ENCODE measurements at regions of chr2 and their contacts with region 1.

Region 1: DNA sequence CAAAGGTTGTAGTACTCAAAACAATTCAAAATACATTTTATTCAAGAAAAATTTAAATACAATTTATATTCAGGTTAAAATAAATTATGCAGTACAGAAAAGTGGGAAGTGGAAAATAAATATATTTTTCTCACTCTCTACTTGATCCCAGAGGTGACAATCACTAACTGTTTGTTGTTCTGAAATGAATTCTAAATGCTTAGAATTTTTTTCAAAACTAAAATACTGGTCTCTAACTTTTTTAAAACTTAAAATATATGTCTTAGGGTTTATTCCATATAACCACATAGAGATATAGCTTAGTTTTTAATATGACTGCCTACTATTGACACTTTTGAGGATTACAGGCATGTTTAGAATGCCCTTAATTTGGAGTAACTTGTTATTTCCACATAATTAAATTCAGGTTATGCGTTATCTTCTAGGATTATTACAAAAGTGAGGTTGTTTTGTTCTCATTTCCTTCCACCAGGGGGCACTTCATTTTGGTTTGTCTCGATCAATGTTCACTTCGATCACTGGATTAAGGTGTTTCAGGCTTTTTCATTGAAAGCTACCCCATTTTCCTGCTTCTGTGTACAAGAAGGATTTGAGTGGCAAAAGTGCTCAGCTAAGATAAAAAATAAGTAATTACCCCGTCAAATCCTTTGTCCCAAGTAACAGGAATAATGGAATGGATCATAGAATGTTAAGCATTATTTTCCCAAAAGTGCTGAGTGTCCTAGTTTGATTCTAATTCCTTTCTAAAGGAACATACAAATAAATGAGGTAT is 27.1 kb upstream of the TFPI start:
- DNase-seq: no peak
- ATAC-seq: peak; percentile 59
- H3K4me3 ChIP-seq: peak overlapping the region; percentile 31 to 90
- H3K27ac ChIP-seq: no peak overlapping the region
- H3K4me1 ChIP-seq: peaks cover 0 to 2% of the 10 kb centered on the region in 2 donors
- H3K27me3 ChIP-seq: no peaks in the 10 kb centered on the region

Region 2: DNA sequence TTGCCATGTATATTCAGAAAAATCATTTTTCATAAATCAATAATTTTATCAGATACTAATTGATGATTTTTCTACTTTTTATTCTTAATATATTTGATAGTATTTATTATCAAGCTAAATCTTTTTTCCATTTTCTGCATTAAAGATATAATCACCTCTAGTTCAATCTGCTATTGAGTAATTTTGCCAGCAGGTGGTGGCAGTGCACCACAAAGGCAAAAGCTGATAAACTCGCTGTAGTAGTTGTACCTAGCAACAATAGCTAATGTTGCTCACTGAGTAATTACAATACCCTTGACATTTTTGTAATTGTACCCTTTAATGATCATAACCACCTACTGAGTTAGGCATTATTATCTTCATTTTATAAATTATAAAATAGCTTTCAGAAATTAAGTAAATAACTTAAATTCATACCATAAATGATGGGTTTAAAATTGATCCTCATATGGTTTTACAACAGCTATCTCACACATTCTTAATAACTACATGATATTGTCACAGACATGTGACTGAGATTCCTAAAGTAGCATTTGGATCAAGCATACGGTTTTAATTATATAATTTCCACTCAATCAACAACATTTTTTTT is 81.3 kb before region 1 on chr2:
- intact Hi-C with region 1: loop called (anchors 1 kb)
- DNase-seq: peak in 1 of 2 donors; percentile 52
- ATAC-seq: peak; percentile 84
- H3K4me3 ChIP-seq: no peak overlapping the region
- H3K27ac ChIP-seq: no peak overlapping the region
- H3K4me1 ChIP-seq: no peaks in the 10 kb centered on the region
- H3K27me3 ChIP-seq: no peaks in the 10 kb centered on the region

Measured in aorta (tissue), 5 donors.